CD14-positive monocyte (primary cell): ENCODE measurements at regions of chr3 and their contacts with region 1.

Region 1: DNA sequence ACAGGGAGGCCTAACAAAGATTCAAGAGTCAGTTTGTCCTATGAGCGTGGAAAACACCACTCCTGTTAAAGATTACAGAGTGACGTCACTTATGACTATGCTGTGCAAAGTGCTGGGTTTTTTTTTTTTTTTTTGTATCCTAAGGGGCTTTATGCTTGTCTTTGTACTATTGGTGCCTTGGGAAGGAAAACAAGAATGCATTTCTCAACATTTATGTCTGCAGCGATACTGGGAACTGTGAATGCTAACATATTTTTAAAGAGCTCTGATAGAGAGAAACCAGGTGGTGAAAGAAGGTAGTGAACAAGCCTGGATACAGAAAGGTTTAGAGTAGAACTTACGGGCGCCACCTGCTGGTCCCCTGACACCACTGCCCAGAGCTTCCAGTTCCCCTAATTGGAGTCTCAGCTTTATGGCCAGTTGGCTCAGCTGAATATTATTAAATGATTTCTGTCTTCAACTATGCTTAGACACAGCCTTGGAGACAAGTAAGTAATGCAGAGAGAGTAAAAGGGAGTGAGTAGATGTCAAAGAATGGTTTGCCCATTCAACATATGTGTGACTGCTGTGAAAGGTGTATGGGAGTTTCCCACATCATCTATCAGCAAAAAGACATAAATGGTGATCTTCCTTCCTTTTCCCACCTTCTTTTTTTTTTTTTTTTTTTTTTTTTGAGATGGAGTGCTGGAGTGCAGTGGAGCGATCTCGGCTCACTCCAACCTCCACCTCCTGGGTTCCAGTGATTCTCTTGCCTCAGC is 807.9 kb upstream of the CFAP20DC start:
- DNase-seq: peak; percentile 51 to 75 (median 70)
- H3K4me3 ChIP-seq: no peak overlapping the region
- H3K4me3 Mint-ChIP-seq: no peak overlapping the region
- H3K27ac ChIP-seq: no peak overlapping the region
- H3K27ac Mint-ChIP-seq: no peak overlapping the region
- H3K4me1 ChIP-seq: no peaks in the 10 kb centered on the region
- H3K4me1 Mint-ChIP-seq: peaks cover 2% of the 10 kb centered on the region
- H3K27me3 ChIP-seq: no peaks in the 10 kb centered on the region
- H3K27me3 Mint-ChIP-seq: peaks cover 0 to 4% (median 0%) of the 10 kb centered on the region in 3 donors
- CTCF ChIP-seq: peak; percentile 87

Region 2: GRCh38 chr3:58640700-58641372 is 1216.9 kb before region 1 on chr3:
- intact Hi-C with region 1: loop called in 1 of 2 experiments (anchors 10 kb)
- DNase-seq: peak; percentile 36 to 57 (median 54)
- H3K4me3 ChIP-seq: no peak overlapping the region
- H3K4me3 Mint-ChIP-seq: no peak overlapping the region
- H3K27ac ChIP-seq: no peak overlapping the region
- H3K27ac Mint-ChIP-seq: no peak overlapping the region
- H3K4me1 ChIP-seq: peaks cover 2 to 4% of the 10 kb centered on the region in 2 donors
- H3K4me1 Mint-ChIP-seq: peaks cover 4% of the 10 kb centered on the region
- H3K27me3 ChIP-seq: no peaks in the 10 kb centered on the region
- H3K27me3 Mint-ChIP-seq: peaks cover 0 to 11% (median 0%) of the 10 kb centered on the region in 3 donors
- CTCF ChIP-seq: peak; percentile 93

Region 3: GRCh38 chr3:59212128-59212779 is 645.5 kb before region 1 on chr3:
- intact Hi-C with region 1: loop called (anchors 10 kb)
- DNase-seq: peak; percentile 30 to 70 (median 61)
- H3K4me3 ChIP-seq: no peak overlapping the region
- H3K4me3 Mint-ChIP-seq: no peak overlapping the region
- H3K27ac ChIP-seq: no peak overlapping the region
- H3K27ac Mint-ChIP-seq: no peak overlapping the region
- H3K4me1 ChIP-seq: peaks cover 3 to 4% of the 10 kb centered on the region in 2 donors
- H3K4me1 Mint-ChIP-seq: peaks cover 4% of the 10 kb centered on the region
- H3K27me3 ChIP-seq: no peaks in the 10 kb centered on the region
- H3K27me3 Mint-ChIP-seq: peaks cover 2 to 7% (median 2%) of the 10 kb centered on the region in 3 donors
- CTCF ChIP-seq: peak; percentile 86

Region 4: GRCh38 chr3:59575113-59576001 is 282.4 kb before region 1 on chr3:
- intact Hi-C with region 1: loop called (anchors 5 kb)
- DNase-seq: peak; percentile 43 to 64 (median 60)
- H3K4me3 ChIP-seq: no peak overlapping the region
- H3K4me3 Mint-ChIP-seq: no peak overlapping the region
- H3K27ac ChIP-seq: no peak overlapping the region
- H3K27ac Mint-ChIP-seq: no peak overlapping the region
- H3K4me1 ChIP-seq: no peaks in the 10 kb centered on the region
- H3K4me1 Mint-ChIP-seq: no peaks in the 10 kb centered on the region
- H3K27me3 ChIP-seq: no peaks in the 10 kb centered on the region
- H3K27me3 Mint-ChIP-seq: peaks cover 1 to 4% (median 1%) of the 10 kb centered on the region in 3 donors
- CTCF ChIP-seq: peak; percentile 98

Region 5: DNA sequence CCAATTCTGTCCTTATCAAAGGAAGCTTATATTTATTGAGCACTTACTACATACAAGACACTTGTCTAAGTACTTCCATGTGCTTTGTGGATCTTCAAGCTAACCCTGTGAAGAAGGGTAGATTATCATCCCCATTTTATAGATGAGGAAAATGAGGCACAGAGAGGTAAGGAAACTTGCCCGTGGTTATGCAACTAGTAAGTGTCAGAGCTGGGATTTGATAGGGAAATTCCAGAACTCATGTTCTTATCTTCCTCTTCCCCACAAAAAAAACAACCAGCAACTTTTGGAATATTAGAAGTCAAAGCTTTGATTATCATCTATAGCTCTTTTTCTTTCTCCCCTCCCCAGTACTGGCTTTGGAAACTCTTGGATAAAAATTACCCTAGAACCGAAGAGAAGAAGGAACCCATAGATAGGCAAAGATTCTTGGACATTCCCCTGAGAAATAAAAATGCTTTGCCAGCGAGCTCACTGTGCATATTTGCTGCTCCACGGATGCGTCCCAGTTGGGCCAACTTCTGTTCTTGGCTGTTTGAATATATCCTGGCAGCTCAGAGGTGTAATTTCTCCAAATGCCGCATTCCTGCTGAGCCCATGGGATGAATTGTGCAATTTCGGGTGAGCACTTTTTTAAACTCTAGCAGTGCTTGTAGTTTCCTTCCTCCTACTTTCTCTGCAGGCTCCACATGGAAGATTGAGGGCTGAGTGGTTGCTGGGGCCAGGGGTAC is 216.4 kb before region 1 on chr3:
- intact Hi-C with region 1: no loop called
- DNase-seq: no peak
- H3K4me3 ChIP-seq: no peak overlapping the region
- H3K4me3 Mint-ChIP-seq: no peak overlapping the region
- H3K27ac ChIP-seq: no peak overlapping the region
- H3K27ac Mint-ChIP-seq: no peak overlapping the region
- H3K4me1 ChIP-seq: no peaks in the 10 kb centered on the region
- H3K4me1 Mint-ChIP-seq: peaks cover 2% of the 10 kb centered on the region
- H3K27me3 ChIP-seq: peaks cover 5 to 6% of the 10 kb centered on the region in 2 donors
- H3K27me3 Mint-ChIP-seq: peaks cover 8 to 14% (median 8%) of the 10 kb centered on the region in 3 donors
- CTCF ChIP-seq: no peak